ENCODE measurements at regions of chr3 and their contacts with region 1.

Region 1: GRCh38 chr3:124845406-124845805 is 41.8 kb downstream of the ITGB5 start:
- DNase-seq: peak in 1 of 2 experiments; percentile 76
- ATAC-seq: peak; percentile 74 to 83
- H3K4me3 ChIP-seq: no peak overlapping the region
- H3K27ac ChIP-seq: peak overlapping the region; percentile 71 to 86
- H3K4me1 ChIP-seq: peaks cover 75% of the 10 kb centered on the region
- CTCF ChIP-seq: no peak
- EP300 ChIP-seq: no peak
- POLR2A ChIP-seq: no peak
- RAD21 ChIP-seq: no peak

Region 2: GRCh38 chr3:124826703-124827102 is 18.7 kb before region 1 on chr3:
- CTCF ChIA-PET with region 1: interaction called, 12 read pairs
- POLR2A ChIA-PET with region 1: no interaction called
- DNase-seq: no peak
- ATAC-seq: peak; percentile 51 to 62; a peak in 4 of 6 replicates
- H3K4me3 ChIP-seq: no peak overlapping the region
- H3K27ac ChIP-seq: peak overlapping the region; percentile 52 to 81
- H3K4me1 ChIP-seq: peaks cover 54% of the 10 kb centered on the region
- CTCF ChIP-seq: no peak
- EP300 ChIP-seq: no peak
- POLR2A ChIP-seq: no peak
- RAD21 ChIP-seq: no peak

Region 3: DNA sequence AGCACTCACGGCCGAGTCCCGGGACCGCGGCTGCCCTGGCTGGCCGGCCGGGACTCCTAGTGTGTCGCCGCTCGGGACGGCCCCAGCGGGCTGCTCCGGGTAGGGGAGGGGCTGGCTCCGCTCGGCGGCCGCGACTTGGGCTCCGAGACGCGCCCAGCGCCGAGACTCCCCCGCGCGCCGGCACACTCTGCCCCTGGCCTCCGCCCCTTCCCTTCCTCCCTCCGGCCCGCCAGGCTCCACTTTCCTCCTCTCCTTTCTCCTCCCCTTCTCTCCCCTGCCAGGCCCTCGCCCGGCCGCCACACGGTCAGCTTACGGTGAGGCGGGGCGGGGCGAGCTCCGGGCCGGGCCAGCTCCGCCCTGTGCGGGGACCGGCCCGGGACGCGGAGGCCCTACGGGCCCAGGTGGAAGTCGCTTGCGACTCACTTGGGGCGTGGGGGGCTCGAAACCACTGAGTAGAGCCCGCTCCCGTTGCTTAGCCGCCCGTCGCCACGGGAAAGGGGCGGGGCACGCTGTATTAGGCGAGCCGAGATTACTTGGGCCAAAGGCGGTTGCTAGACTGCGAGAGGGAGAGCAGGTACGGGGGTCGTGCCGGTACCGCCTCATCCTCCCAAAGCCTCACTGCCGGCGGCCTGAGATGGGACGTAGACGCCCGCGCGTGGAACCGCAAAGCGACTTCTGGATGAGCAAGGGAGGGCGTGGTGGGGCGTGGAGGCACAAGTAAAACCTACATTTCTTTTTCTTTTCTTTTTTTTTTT is 41.9 kb after region 1 on chr3 and contains the start of gene ITGB5:
- CTCF ChIA-PET with region 1: interaction called, 5 read pairs
- POLR2A ChIA-PET with region 1: interaction called, 10 read pairs
- DNase-seq: peak; percentile 53 to 88
- ATAC-seq: peak; percentile 84 to 89
- H3K4me3 ChIP-seq: peak within 1 kb of the TSS; percentile 60
- H3K27ac ChIP-seq: peak within 1 kb of the TSS; percentile 90 to 99
- H3K4me1 ChIP-seq: peaks cover 41% of the 10 kb centered on the region
- CTCF ChIP-seq: no peak
- EP300 ChIP-seq: no peak
- POLR2A ChIP-seq: peak; percentile 68
- RAD21 ChIP-seq: no peak; a peak in 1 of 5 replicates
- polyA plus RNA-seq, gene ITGB5: 260 and 476 TPM in 2 replicates

Measured in A549 (cell line).